Naive thymus-derived CD4-positive, alpha-beta T cell (primary cell): ENCODE measurements at regions of chr18 and their contacts with region 1.

Region 1: DNA sequence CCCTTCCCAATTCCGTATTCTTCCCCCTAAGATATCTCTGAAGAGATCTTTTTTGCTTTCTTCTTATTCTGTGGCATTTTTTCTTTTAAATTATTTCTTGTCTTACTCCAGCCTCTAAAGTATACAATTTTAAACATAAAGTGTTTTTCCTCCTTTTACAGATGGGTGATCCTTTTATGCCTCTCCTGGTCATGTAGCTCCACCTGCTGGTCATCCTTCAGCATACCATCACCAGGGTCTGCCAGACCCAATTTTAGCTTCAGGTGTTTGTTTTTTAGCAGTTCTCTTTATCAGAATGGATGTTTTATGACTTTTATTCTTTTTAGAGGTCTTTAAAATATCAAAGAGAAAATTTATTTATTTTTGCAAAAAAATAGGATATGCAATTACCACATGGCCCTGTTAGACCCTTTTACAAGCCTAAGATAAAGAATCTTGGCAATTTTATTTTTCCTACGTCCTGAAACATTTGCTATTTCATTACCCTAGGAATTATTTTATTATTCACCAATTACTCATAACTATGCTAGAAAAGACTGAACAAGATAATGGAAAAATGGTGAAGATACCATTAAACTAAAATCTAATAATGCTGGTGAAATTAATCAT is 55.5 kb downstream of the PIGN start:
- DNase-seq: peak; percentile 11 to 73 (median 57)
- ATAC-seq: peak; percentile 71
- H3K4me3 ChIP-seq: no peak overlapping the region
- H3K4me3 Mint-ChIP-seq: no peak overlapping the region
- H3K27ac ChIP-seq: no peak overlapping the region
- H3K27ac Mint-ChIP-seq: no peak overlapping the region
- H3K4me1 ChIP-seq: no peaks in the 10 kb centered on the region
- H3K4me1 Mint-ChIP-seq: peaks cover 0 to 5% (median 0%) of the 10 kb centered on the region in 7 donors
- H3K27me3 ChIP-seq: no peaks in the 10 kb centered on the region
- H3K27me3 Mint-ChIP-seq: no peaks in the 10 kb centered on the region

Region 2: GRCh38 chr18:61209801-61210200 is 921.6 kb before region 1 on chr18:
- CTCF ChIA-PET with region 1: no interaction called
- POLR2A ChIA-PET with region 1: no interaction called
- intact Hi-C with region 1: no loop called
- DNase-seq: no peak
- ATAC-seq: no peak
- H3K4me3 ChIP-seq: no peak overlapping the region
- H3K4me3 Mint-ChIP-seq: no peak overlapping the region
- H3K27ac ChIP-seq: no peak overlapping the region
- H3K27ac Mint-ChIP-seq: no peak overlapping the region
- H3K4me1 ChIP-seq: no peaks in the 10 kb centered on the region
- H3K4me1 Mint-ChIP-seq: no peaks in the 10 kb centered on the region
- H3K27me3 ChIP-seq: no peaks in the 10 kb centered on the region
- H3K27me3 Mint-ChIP-seq: no peaks in the 10 kb centered on the region

Region 3: DNA sequence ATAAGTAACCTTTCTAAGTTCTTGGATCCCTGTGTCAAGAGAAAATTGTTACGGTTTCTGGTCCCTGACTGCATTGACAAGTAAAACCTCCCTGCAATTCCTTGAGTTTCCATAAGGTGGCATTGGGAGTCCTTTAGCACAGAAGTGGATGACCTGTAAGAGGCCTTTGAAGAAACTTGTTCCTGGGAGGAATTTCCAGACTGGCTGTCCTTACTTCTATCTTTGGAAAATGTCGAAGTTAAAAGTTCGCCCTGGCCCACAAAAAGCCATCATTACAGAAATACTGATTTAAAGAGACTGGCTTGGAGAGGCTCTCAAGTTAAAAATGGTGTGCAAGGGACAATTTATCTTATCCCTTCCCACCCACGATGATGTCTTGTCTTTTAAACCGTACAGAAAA is 579.8 kb before region 1 on chr18:
- CTCF ChIA-PET with region 1: interaction called, 5 read pairs
- POLR2A ChIA-PET with region 1: no interaction called
- intact Hi-C with region 1: loop called (anchors 1 kb)
- DNase-seq: peak in 5 of 9 donors; percentile 8 to 25 (median 23)
- ATAC-seq: no peak
- H3K4me3 ChIP-seq: no peak overlapping the region
- H3K4me3 Mint-ChIP-seq: no peak overlapping the region
- H3K27ac ChIP-seq: no peak overlapping the region
- H3K27ac Mint-ChIP-seq: no peak overlapping the region
- H3K4me1 ChIP-seq: no peaks in the 10 kb centered on the region
- H3K4me1 Mint-ChIP-seq: peaks cover 0 to 31% (median 2%) of the 10 kb centered on the region in 7 donors
- H3K27me3 ChIP-seq: no peaks in the 10 kb centered on the region
- H3K27me3 Mint-ChIP-seq: peaks cover 0 to 16% (median 5%) of the 10 kb centered on the region in 5 donors

Region 4: DNA sequence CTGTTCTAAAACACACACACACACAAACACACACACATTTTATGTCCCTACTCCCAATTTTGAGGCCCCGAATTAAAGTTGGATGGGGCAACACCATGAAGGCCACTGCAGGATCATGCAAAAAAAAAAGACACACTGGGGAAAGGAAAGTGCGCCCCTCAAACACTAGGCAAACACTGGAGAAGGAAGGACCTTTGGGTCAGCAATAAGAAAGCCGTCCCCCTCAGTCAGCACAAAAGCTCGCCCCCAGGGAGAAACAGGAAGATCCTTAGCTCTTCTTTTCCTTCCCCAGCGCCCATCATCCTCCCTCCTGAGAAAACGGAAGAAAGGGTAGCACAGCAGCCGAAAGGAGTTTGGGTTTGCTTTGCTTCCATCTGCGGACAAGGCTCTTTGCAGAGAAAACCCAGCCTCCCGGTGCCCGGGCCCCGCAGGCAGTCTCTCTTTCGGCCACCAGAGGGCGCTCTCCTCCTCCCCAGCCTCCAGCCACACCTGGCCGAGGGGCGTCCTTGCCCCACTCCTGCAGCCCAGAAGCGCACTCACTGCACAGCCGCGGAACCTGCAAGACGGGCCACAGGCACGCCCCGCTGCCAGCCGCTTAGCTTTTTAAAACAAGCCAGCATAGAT is 549.7 kb before region 1 on chr18:
- CTCF ChIA-PET with region 1: interaction called, 8 read pairs
- POLR2A ChIA-PET with region 1: no interaction called
- intact Hi-C with region 1: loop called (anchors 1 kb)
- DNase-seq: peak; percentile 30 to 71 (median 58)
- ATAC-seq: peak; percentile 81
- H3K4me3 ChIP-seq: no peak overlapping the region
- H3K4me3 Mint-ChIP-seq: peak overlapping the region in 6 of 10 donors; percentile 16 to 70 (median 44)
- H3K27ac ChIP-seq: no peak overlapping the region
- H3K27ac Mint-ChIP-seq: peak overlapping the region in 2 of 9 donors; percentile 38 to 81
- H3K4me1 ChIP-seq: peaks cover 0 to 5% of the 10 kb centered on the region in 2 donors
- H3K4me1 Mint-ChIP-seq: peaks cover 5 to 12% (median 9%) of the 10 kb centered on the region in 7 donors
- H3K27me3 ChIP-seq: peaks cover 0 to 6% of the 10 kb centered on the region in 2 donors
- H3K27me3 Mint-ChIP-seq: peaks cover 40 to 76% (median 56%) of the 10 kb centered on the region in 5 donors

Region 5: DNA sequence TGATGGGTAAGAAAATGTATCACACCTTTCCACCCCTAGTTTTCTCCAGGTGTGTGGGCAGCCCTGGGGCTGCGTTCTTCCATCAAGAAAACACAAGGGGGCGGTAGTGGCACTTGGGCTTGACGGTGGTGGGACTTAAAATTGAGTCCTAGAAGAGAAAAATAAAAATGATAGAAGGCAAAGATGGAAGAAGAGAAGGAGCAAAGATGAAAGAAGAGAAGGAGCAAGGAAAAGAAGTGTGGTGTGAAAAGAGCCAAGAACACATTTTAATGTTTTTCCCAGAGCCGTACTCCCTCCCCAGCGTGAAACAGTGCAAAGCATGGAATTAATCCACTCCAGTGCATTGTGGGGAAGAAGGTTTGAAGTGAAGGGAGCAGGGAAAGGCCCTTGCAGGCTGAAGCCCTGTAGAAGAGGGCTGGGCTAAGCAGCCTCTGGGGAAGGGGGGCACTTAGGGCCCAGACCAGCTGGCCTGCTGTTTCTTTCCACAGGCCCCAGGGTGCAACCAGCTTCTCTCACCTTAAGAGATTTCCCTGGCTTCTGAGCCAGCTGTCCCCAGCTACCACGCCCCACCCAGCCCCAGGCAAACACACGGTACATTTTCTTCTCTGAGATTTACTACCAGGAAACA is 495.4 kb before region 1 on chr18:
- CTCF ChIA-PET with region 1: interaction called, 16 read pairs
- POLR2A ChIA-PET with region 1: no interaction called
- intact Hi-C with region 1: loop called in 1 of 2 experiments (anchors 1 kb)
- DNase-seq: peak in 6 of 9 donors; percentile 18 to 38 (median 31)
- ATAC-seq: peak; percentile 45
- H3K4me3 ChIP-seq: no peak overlapping the region
- H3K4me3 Mint-ChIP-seq: no peak overlapping the region
- H3K27ac ChIP-seq: no peak overlapping the region
- H3K27ac Mint-ChIP-seq: no peak overlapping the region
- H3K4me1 ChIP-seq: no peaks in the 10 kb centered on the region
- H3K4me1 Mint-ChIP-seq: peaks cover 0 to 4% (median 0%) of the 10 kb centered on the region in 7 donors
- H3K27me3 ChIP-seq: no peaks in the 10 kb centered on the region
- H3K27me3 Mint-ChIP-seq: peaks cover 3 to 18% (median 12%) of the 10 kb centered on the region in 5 donors

Region 6: DNA sequence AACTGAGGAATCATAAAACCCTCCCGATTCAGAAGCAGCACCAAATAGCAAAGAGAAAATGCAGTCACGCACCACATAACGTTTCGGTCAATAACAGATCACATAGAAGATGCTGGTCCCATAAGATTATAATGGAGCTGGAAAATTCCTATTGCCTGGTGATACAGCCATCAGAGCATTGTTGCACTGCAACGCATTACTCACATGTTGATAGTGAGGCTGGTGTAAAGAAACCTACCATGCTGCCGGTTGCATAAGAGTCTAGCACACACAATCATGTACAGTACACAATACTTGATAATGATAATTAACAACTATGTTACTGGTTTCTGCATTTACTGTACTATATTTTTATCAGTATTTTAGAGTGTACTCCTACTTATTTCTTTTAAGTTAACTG is 271.1 kb before region 1 on chr18:
- CTCF ChIA-PET with region 1: no interaction called
- POLR2A ChIA-PET with region 1: no interaction called
- intact Hi-C with region 1: loop called (anchors 1 to 5 kb)
- DNase-seq: no peak
- ATAC-seq: no peak
- H3K4me3 ChIP-seq: no peak overlapping the region
- H3K4me3 Mint-ChIP-seq: no peak overlapping the region
- H3K27ac ChIP-seq: no peak overlapping the region
- H3K27ac Mint-ChIP-seq: peak overlapping the region in 1 of 9 donors; percentile 25
- H3K4me1 ChIP-seq: no peaks in the 10 kb centered on the region
- H3K4me1 Mint-ChIP-seq: no peaks in the 10 kb centered on the region
- H3K27me3 ChIP-seq: no peaks in the 10 kb centered on the region
- H3K27me3 Mint-ChIP-seq: peaks cover 0 to 9% (median 0%) of the 10 kb centered on the region in 5 donors

Region 7: DNA sequence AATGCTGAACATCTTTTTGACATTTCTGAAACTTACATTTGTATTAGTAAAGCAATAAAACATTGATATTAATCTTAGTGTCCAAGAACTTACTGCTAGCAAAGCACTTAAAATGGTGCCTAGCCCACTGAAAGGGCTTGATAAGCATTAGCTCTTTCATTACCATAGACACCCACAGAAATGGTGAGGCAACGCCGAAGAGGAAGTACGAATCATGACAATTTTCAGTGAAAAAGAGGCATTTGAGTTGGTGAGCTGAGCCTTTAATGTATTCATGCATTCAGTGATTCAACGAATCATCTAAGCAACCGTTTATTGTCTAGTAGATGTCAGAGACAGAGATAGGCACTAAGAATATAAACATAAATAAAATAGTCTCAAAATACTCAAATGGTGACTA is 45.6 kb before region 1 on chr18:
- CTCF ChIA-PET with region 1: no interaction called
- POLR2A ChIA-PET with region 1: no interaction called
- intact Hi-C with region 1: no loop called
- DNase-seq: no peak
- ATAC-seq: no peak
- H3K4me3 ChIP-seq: no peak overlapping the region
- H3K4me3 Mint-ChIP-seq: peak overlapping the region in 2 of 10 donors; percentile 27 to 67
- H3K27ac ChIP-seq: no peak overlapping the region
- H3K27ac Mint-ChIP-seq: peak overlapping the region in 3 of 9 donors; percentile 14 to 44 (median 38)
- H3K4me1 ChIP-seq: peaks cover 0 to 18% of the 10 kb centered on the region in 2 donors
- H3K4me1 Mint-ChIP-seq: peaks cover 13 to 41% (median 36%) of the 10 kb centered on the region in 7 donors
- H3K27me3 ChIP-seq: no peaks in the 10 kb centered on the region
- H3K27me3 Mint-ChIP-seq: no peaks in the 10 kb centered on the region

Region 8: DNA sequence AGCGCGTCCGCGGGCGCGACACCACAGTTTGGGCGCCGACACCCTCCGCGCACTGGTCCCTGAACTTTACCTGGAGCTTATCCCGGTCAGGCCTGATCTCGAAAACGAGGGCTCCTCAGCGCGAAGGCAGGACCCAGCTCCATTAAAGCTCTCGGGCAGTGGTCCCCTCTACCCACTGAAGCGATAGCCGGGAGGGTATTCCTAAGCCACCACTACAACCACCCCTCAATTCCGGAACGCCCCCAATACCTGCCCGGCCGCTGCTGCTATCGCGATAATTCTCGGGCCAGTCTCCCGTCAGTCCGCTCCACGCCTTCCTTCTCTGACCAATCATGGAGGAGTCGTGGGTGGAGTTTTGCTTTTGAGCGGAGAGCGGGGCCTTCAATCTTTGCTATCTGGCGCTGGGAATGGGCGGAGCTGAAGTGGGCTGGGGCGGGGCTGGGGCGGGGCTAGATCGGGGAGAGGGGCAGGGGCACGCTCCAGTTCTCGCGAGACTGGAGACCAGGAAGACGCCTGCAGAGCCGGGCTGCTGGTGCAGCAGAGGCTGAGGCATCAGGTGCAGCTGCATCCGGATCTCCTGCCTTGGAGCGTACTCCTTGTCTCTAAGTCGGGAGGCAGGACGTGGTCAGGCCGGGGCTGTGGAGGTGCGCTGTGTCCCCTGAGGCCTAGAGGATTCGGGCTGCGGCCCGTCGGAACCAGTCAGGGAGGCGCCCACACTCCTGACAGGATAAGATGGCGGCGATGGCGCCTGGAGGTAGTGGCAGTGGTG is 55.6 kb after region 1 on chr18 and contains the starts of genes PIGN and RELCH:
- CTCF ChIA-PET with region 1: no interaction called
- POLR2A ChIA-PET with region 1: no interaction called
- intact Hi-C with region 1: no loop called
- DNase-seq: peak; percentile 73 to 98 (median 96)
- ATAC-seq: peak; percentile 97
- H3K4me3 ChIP-seq: peak within 1 kb of the TSS; percentile 97
- H3K4me3 Mint-ChIP-seq: peak within 1 kb of the TSS; percentile 96 to 100 (median 99)
- H3K27ac ChIP-seq: peak within 1 kb of the TSS; percentile 74
- H3K27ac Mint-ChIP-seq: peak within 1 kb of the TSS; percentile 91 to 98 (median 96)
- H3K4me1 ChIP-seq: peaks cover 18 to 21% of the 10 kb centered on the region in 2 donors
- H3K4me1 Mint-ChIP-seq: peaks cover 48 to 76% (median 69%) of the 10 kb centered on the region in 7 donors
- H3K27me3 ChIP-seq: no peaks in the 10 kb centered on the region
- H3K27me3 Mint-ChIP-seq: no peaks in the 10 kb centered on the region
- total RNA-seq, gene PIGN: 18.2 to 29.8 (median 28.2) TPM
- total RNA-seq, gene RELCH: 51.3 to 70.8 (median 62.1) TPM